AG04450 (cell line): ENCODE measurements at regions of chr5 and their contacts with region 1.

Region 1: DNA sequence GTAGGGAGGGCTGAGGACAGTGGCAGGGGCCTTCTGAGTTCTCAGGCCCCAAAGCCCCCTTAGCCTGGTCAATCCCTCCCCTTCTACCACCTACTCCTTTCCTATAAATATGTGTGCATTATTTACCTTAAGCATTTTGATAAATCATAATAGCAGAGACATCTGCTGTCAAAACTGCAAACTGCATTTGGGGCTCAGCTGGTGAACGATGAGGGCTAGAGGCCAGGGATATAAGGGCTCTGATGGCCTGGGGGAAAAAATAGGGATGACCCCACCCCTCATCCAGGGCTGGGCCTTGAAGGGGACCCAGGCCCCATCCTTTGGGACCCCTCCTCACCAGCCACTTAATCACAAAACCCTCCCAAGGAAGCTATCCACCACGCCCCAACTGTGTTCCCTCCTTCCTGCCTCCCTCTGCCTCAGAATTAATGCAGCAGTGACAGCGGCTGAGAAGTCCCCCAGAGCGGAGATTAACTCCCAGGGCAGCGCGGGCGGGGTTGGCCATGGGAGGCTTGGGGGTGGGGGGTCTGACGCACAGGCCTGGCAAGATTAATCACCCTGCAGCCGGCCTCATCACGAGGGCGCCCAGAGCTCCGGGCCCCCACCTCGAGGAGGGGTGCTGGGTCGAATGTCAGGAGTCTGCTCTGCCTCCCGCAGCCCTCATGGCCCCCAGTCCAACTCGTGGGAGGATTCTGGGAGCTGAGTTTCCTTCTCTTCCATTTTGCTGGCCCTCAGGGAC is 42.1 kb downstream of the CXXC5 start:
- DNase-seq: no peak
- H3K4me3 ChIP-seq: no peak overlapping the region
- H3K27ac ChIP-seq: peak overlapping the region; percentile 31
- H3K27me3 ChIP-seq: no peaks in the 10 kb centered on the region
- CTCF ChIP-seq: peak; percentile 56

Region 2: GRCh38 chr5:139343476-139343875 is 346.8 kb before region 1 on chr5:
- CTCF ChIA-PET with region 1: no interaction called
- POLR2A ChIA-PET with region 1: no interaction called
- DNase-seq: no peak
- H3K4me3 ChIP-seq: peak overlapping the region; percentile 100
- H3K27ac ChIP-seq: no peak overlapping the region
- H3K27me3 ChIP-seq: no peaks in the 10 kb centered on the region
- CTCF ChIP-seq: no peak

Region 3: GRCh38 chr5:139593716-139594319 is 96.4 kb before region 1 on chr5:
- CTCF ChIA-PET with region 1: interaction called, 11 read pairs
- POLR2A ChIA-PET with region 1: no interaction called
- DNase-seq: peak; percentile 29
- H3K4me3 ChIP-seq: no peak overlapping the region
- H3K27ac ChIP-seq: no peak overlapping the region
- H3K27me3 ChIP-seq: no peaks in the 10 kb centered on the region
- CTCF ChIP-seq: no peak

Region 4: GRCh38 chr5:139651853-139652787 is 38.1 kb before region 1 on chr5:
- CTCF ChIA-PET with region 1: no interaction called
- POLR2A ChIA-PET with region 1: interaction called, 12 read pairs
- DNase-seq: no peak
- H3K4me3 ChIP-seq: peak overlapping the region; percentile 80
- H3K27ac ChIP-seq: peak overlapping the region; percentile 96
- H3K27me3 ChIP-seq: no peaks in the 10 kb centered on the region
- CTCF ChIP-seq: no peak